ENCODE measurements at regions of chr13 and their contacts with region 1.

Region 1: GRCh38 chr13:26186118-26186870 is 35.8 kb downstream of the RNF6 start:
- DNase-seq: peak; percentile 93
- ATAC-seq: peak; percentile 94
- H3K4me3 ChIP-seq: peak overlapping the region; percentile 80
- H3K27ac ChIP-seq: no peak overlapping the region
- H3K4me1 ChIP-seq: 0 out of 2 replicates have a peak, but pooled peaks cover 4% of the 10 kb centered on the region
- H3K27me3 ChIP-seq: 0 out of 2 replicates have a peak, but pooled peaks cover 3% of the 10 kb centered on the region
- CTCF ChIP-seq: peak; percentile 57

Region 2: GRCh38 chr13:26074706-26075105 is 111.6 kb before region 1 on chr13:
- CTCF ChIA-PET with region 1: no interaction called
- POLR2A ChIA-PET with region 1: no interaction called
- intact Hi-C with region 1: no loop called
- DNase-seq: peak; percentile 24
- ATAC-seq: no peak
- H3K4me3 ChIP-seq: no peak overlapping the region
- H3K27ac ChIP-seq: no peak overlapping the region
- H3K4me1 ChIP-seq: no peaks in the 10 kb centered on the region
- H3K27me3 ChIP-seq: peaks cover 16% of the 10 kb centered on the region
- CTCF ChIP-seq: no peak

Region 3: DNA sequence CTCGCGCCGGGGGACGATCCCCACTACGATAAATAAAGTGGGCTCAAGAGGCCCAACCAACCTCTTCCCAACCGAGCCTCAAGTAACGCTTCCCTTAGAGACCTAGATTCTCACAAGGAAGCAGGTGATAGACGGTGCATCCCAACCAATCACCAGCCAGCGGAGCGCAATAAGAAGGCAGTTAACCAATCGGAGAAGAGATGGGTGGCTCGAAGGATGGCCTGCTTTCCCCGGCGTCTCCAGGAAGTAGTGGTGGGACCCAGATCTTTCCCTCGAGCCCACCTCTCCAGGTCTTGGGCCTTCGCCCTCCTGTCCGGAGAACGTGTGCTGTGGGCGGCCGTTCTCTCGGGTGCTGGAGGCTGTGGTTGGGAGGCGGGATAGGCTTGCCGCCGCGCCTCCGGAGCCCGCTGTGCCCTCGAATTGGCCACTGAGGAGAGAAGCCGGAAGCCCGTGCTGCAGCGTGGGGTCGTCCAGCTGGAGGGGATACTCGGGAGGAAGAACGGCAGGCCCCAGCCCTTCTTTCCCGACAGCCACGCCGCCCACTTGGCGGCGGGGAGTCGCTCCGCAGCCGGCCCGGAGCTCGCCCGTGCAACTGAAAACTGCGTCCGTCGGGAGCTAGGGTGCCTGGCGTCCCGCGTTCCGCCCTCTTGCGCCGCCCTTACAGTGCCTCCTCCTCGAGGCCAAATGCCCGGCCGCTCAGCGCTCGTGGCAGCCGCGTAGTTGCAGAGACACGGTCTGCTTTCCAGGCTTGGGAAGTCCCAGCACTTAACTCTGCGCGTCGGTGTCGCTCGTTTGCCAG is 35.6 kb after region 1 on chr13 and contains the start of gene RNF6:
- CTCF ChIA-PET with region 1: no interaction called
- POLR2A ChIA-PET with region 1: no interaction called
- intact Hi-C with region 1: loop called (anchors 1 kb)
- DNase-seq: peak; percentile 94
- ATAC-seq: peak; percentile 97
- H3K4me3 ChIP-seq: peak within 1 kb of the TSS; percentile 96
- H3K27ac ChIP-seq: peak within 1 kb of the TSS; percentile 92
- H3K4me1 ChIP-seq: peaks cover 23% of the 10 kb centered on the region
- H3K27me3 ChIP-seq: no peaks in the 10 kb centered on the region
- CTCF ChIP-seq: no peak
- total RNA-seq, gene RNF6: 23.8 and 34.0 TPM in 2 replicates

Region 4: DNA sequence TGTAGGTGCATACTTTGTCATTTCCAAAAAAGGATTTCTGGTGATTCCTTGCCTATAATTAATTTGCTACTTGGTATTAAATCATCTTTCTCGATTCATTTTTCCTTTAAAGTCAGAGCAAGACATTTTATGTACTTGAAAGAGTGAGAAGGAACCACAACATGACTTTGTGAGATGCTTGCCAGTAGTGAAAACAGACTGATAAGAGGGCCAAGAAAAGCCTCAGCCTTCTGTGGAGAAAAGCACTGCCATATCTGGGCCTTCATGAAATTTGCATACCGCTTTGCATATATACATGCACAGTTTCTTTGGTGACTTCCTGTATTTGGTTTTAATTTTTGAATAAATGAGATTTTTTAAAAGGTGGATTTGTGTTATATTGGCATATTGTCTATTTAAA is 196.1 kb after region 1 on chr13:
- CTCF ChIA-PET with region 1: no interaction called
- POLR2A ChIA-PET with region 1: no interaction called
- intact Hi-C with region 1: loop called (anchors 10 kb)
- DNase-seq: no peak
- ATAC-seq: no peak
- H3K4me3 ChIP-seq: no peak overlapping the region
- H3K27ac ChIP-seq: no peak overlapping the region
- H3K4me1 ChIP-seq: peaks cover 10% of the 10 kb centered on the region
- H3K27me3 ChIP-seq: no peaks in the 10 kb centered on the region
- CTCF ChIP-seq: no peak

Region 5: GRCh38 chr13:26498656-26499591 is 312.6 kb after region 1 on chr13:
- CTCF ChIA-PET with region 1: interaction called, 28 read pairs
- POLR2A ChIA-PET with region 1: no interaction called
- intact Hi-C with region 1: loop called (anchors 1 kb)
- DNase-seq: peak; percentile 28
- ATAC-seq: peak; percentile 53
- H3K4me3 ChIP-seq: no peak overlapping the region
- H3K27ac ChIP-seq: no peak overlapping the region
- H3K4me1 ChIP-seq: no peaks in the 10 kb centered on the region
- H3K27me3 ChIP-seq: no peaks in the 10 kb centered on the region; the same call in 1 of the 2 replicates
- CTCF ChIP-seq: peak; percentile 29; the same call in 1 of the 2 replicates

Region 6: GRCh38 chr13:26605845-26606244 is 419.6 kb after region 1 on chr13:
- CTCF ChIA-PET with region 1: interaction called, 10 read pairs
- POLR2A ChIA-PET with region 1: no interaction called
- intact Hi-C with region 1: loop called (anchors 5 kb)
- DNase-seq: peak; percentile 22
- ATAC-seq: peak; percentile 73
- H3K4me3 ChIP-seq: no peak overlapping the region
- H3K27ac ChIP-seq: no peak overlapping the region
- H3K4me1 ChIP-seq: no peaks in the 10 kb centered on the region
- H3K27me3 ChIP-seq: no peaks in the 10 kb centered on the region
- CTCF ChIP-seq: peak; percentile 50

Region 7: GRCh38 chr13:26698392-26699196 is 512.3 kb after region 1 on chr13:
- CTCF ChIA-PET with region 1: interaction called, 34 read pairs
- POLR2A ChIA-PET with region 1: interaction called, 3 read pairs
- intact Hi-C with region 1: loop called (anchors 1 kb)
- DNase-seq: peak; percentile 86
- ATAC-seq: peak; percentile 95
- H3K4me3 ChIP-seq: peak overlapping the region; percentile 65
- H3K27ac ChIP-seq: no peak overlapping the region
- H3K4me1 ChIP-seq: peaks cover 5% of the 10 kb centered on the region; the same call in 1 of the 2 replicates
- H3K27me3 ChIP-seq: peaks cover 16% of the 10 kb centered on the region
- CTCF ChIP-seq: peak; percentile 93